PC-9 (cell line): ENCODE measurements at regions of chr1 and their contacts with region 1.

Region 1: GRCh38 chr1:206734499-206735142 is 36.0 kb upstream of the IL19 start:
- DNase-seq: peak in 1 of 2 experiments; percentile 37
- H3K4me3 ChIP-seq: no peak overlapping the region
- H3K27ac ChIP-seq: no peak overlapping the region
- H3K4me1 ChIP-seq: no peaks in the 10 kb centered on the region
- H3K27me3 ChIP-seq: no peaks in the 10 kb centered on the region
- CTCF ChIP-seq: peak; percentile 89

Region 2: DNA sequence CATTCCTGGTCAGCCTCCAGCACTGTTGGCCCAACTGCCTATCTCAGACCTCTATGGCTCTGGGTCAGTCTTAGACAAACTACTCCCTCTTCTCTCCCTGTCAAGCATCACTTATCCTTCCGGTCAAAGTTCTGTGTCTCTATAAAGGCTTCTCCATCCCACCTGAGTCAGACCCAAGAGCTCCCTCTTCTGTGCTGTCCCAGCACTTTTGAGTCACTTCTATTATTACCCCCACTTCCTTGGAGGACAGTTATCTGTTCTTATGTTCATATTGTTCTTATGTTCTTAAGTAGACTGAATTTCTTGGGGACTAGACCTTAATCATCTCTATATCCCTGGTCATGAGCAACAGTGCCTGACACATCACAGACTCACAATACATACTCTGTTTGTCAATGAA is 66.8 kb after region 1 on chr1:
- CTCF ChIA-PET with region 1: no interaction called
- POLR2A ChIA-PET with region 1: interaction called, 12 read pairs
- intact Hi-C with region 1: no loop called
- DNase-seq: peak in 1 of 2 experiments; percentile 6
- H3K4me3 ChIP-seq: no peak overlapping the region
- H3K27ac ChIP-seq: no peak overlapping the region
- H3K4me1 ChIP-seq: no peaks in the 10 kb centered on the region
- H3K27me3 ChIP-seq: 0 out of 2 replicates have a peak, but pooled peaks cover 5% of the 10 kb centered on the region
- CTCF ChIP-seq: no peak